ENCODE measurements at regions of chr16 and their contacts with region 1.

Region 1: DNA sequence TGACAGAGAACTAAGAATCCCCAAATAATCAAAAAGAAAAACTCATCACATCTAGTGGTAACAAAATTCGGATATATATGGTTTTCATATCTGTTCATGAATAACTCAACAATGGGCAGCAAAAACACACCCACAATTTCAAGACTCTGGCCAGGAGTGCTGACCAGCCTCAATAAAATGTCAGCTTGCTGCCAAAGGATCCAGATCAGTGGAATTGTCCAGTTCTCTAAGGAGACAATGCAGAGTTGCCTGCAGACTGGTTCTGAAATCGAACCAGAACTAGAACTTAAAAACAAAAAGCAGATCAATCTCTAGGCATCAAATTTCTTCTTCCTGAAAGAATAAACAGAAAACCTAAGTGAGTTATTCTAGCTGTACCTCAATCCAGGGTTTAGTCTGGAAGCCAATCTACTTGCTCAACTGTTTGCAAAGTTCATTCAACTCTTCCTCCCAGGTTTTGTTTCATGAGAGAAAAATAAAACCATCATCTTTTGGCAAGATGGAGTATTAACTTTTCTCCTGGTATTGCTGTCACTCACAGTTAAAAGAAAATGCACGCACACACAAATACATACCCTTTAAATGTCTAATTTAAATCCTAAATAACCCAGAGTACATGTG is 61.0 kb downstream of the CFDP1 start:
- DNase-seq: peak; percentile 59
- ATAC-seq: peak; percentile 74
- H3K4me3 ChIP-seq: no peak overlapping the region
- H3K27ac ChIP-seq: no peak overlapping the region
- H3K4me1 ChIP-seq: 0 out of 2 replicates have a peak, but pooled peaks cover 4% of the 10 kb centered on the region
- H3K27me3 ChIP-seq: no peaks in the 10 kb centered on the region
- CTCF ChIP-seq: no peak
- POLR2A ChIP-seq: no peak
- RAD21 ChIP-seq: no peak

Region 2: DNA sequence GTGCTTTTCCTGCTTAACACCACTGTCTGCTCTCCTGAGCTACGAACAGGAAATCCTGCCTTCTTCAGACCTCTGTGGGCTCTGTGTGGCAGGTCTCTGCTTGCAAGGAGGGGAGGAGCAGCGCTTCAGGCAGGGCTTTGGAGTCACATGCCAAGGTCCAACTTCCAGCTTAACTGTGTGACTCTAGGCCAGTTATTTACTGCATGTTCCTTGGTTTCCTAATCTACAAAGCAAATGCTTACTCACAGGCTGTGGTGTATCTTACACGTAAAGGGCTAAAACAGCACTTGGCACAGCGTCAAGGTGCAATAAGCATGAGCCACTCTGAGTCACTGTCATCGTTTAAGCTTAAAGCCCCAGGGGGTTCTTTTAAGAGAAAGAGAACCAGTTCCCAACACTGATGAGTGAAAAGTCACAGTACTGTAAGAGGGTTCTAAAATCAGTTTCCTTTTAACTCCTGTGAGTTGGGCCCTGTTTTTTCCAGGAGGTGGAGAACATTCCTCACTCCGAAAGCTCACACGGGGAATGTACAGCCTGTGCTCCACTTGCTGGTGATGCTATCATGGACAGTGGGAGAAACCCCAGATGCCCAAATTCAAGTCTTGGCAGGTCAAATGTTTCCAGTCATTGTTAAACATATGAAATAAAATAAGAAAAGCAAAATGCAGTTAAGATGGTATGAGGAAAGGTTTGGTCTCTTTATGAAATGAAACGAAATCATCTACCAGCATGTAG is 66.8 kb before region 1 on chr16:
- CTCF ChIA-PET with region 1: no interaction called
- POLR2A ChIA-PET with region 1: no interaction called
- dilution Hi-C with region 1: no loop called
- in situ Hi-C with region 1: loop called (anchors 5 kb)
- intact Hi-C with region 1: loop called (anchors 2 kb)
- DNase-seq: peak; percentile 100
- ATAC-seq: peak; percentile 93
- H3K4me3 ChIP-seq: no peak overlapping the region; the same call in 1 of the 2 replicates
- H3K27ac ChIP-seq: peak overlapping the region; percentile 92
- H3K4me1 ChIP-seq: peaks cover 18% of the 10 kb centered on the region
- H3K27me3 ChIP-seq: no peaks in the 10 kb centered on the region
- CTCF ChIP-seq: no peak
- POLR2A ChIP-seq: peak; percentile 89
- RAD21 ChIP-seq: no peak; the same call in 1 of the 2 replicates

Region 3: DNA sequence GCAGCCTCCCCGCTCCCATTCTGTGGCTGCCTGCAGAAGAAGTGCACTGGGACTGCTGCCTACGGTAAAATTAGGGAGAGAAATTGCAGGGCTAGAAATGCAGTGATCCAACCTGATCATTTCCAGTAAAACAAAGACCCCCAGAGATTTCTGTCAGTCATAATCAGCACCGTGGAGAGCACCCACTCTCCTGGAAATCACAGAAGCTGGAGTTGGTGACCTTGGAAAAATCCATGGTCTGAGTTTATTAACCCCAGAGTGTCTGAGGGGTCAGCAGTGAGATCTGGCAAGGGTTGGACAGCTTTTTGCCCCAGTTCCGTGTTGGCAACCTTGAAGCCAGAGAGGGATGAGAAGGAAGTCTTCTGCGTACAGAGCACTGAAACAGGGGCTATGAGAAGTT is 1834.7 kb after region 1 on chr16:
- CTCF ChIA-PET with region 1: no interaction called
- POLR2A ChIA-PET with region 1: no interaction called
- dilution Hi-C with region 1: no loop called
- in situ Hi-C with region 1: no loop called
- intact Hi-C with region 1: no loop called
- DNase-seq: no peak
- ATAC-seq: no peak
- H3K4me3 ChIP-seq: no peak overlapping the region
- H3K27ac ChIP-seq: no peak overlapping the region
- H3K4me1 ChIP-seq: no peaks in the 10 kb centered on the region
- H3K27me3 ChIP-seq: peaks cover 6% of the 10 kb centered on the region; the same call in 1 of the 2 replicates
- CTCF ChIP-seq: no peak
- POLR2A ChIP-seq: no peak
- RAD21 ChIP-seq: no peak

Measured in IMR-90 (cell line).